OCI-LY7 (cell line): ENCODE measurements at regions of chr5 and their contacts with region 1.

Region 1: GRCh38 chr5:149667084-149667828 is 62.9 kb upstream of the PPARGC1B start:
- DNase-seq: peak; percentile 60
- H3K4me3 ChIP-seq: no peak overlapping the region
- H3K27ac ChIP-seq: no peak overlapping the region
- H3K4me1 ChIP-seq: no peaks in the 10 kb centered on the region
- CTCF ChIP-seq: peak; percentile 99

Region 2: GRCh38 chr5:149828161-149828884 is 161.1 kb after region 1 on chr5:
- CTCF ChIA-PET with region 1: interaction called, 7 read pairs
- POLR2A ChIA-PET with region 1: interaction called, 4 read pairs
- intact Hi-C with region 1: loop called (anchors 1 kb)
- DNase-seq: peak; percentile 87
- H3K4me3 ChIP-seq: no peak overlapping the region
- H3K27ac ChIP-seq: no peak overlapping the region
- H3K4me1 ChIP-seq: peaks cover 3% of the 10 kb centered on the region
- CTCF ChIP-seq: peak; percentile 91